ENCODE measurements at regions of chr12 and their contacts with region 1.

Region 1: DNA sequence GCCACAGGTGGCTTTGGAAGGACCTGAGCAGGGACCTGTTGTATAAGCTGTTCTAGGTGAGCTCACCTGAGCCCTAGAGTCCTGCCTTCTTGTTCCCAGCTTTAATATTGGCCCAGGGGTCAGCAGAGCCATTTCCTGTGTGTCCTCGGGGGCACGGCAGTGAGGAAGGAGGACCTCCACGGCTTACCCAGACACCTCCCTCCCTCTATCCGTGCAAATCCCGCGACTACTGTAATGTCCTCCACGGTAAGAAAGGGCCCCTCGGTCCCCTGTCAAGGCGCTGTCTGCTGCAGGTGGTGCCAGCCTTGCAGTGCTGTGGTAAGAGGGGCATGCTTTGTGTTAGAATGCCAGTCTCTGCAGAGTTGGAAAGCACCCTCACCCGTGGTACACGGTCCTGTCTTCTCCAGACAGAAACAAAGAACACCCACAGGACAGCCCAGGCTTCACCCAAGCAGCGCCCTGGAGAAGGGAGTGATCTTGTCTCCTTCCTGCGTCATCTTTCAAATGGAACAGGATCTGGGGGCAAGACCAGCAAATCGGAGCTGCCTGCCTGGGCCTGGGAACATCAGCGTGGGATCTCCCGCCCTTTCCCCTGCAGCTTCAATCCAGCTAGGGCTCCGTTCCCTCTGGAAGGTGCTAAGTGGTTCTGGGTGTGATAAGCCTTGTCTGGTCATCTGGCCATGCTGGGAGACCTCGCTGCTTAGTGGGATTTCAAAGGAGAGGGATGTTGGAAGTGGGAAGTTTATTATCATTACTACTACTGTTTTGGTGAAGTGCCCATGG is 20.2 kb upstream of the FZD10 start:
- DNase-seq: no peak
- H3K4me3 ChIP-seq: no peak overlapping the region
- H3K27ac ChIP-seq: no peak overlapping the region
- H3K4me1 ChIP-seq: no peaks in the 10 kb centered on the region
- H3K27me3 ChIP-seq: no peaks in the 10 kb centered on the region
- CTCF ChIP-seq: no peak
- EP300 ChIP-seq: no peak
- POLR2A ChIP-seq: no peak

Region 2: GRCh38 chr12:130124605-130125244 is 17.4 kb before region 1 on chr12:
- in situ Hi-C with region 1: no loop called
- intact Hi-C with region 1: loop called (anchors 1 kb)
- DNase-seq: no peak
- H3K4me3 ChIP-seq: no peak overlapping the region
- H3K27ac ChIP-seq: no peak overlapping the region
- H3K4me1 ChIP-seq: no peaks in the 10 kb centered on the region
- H3K27me3 ChIP-seq: no peaks in the 10 kb centered on the region
- CTCF ChIP-seq: no peak
- EP300 ChIP-seq: no peak
- POLR2A ChIP-seq: no peak

Region 3: DNA sequence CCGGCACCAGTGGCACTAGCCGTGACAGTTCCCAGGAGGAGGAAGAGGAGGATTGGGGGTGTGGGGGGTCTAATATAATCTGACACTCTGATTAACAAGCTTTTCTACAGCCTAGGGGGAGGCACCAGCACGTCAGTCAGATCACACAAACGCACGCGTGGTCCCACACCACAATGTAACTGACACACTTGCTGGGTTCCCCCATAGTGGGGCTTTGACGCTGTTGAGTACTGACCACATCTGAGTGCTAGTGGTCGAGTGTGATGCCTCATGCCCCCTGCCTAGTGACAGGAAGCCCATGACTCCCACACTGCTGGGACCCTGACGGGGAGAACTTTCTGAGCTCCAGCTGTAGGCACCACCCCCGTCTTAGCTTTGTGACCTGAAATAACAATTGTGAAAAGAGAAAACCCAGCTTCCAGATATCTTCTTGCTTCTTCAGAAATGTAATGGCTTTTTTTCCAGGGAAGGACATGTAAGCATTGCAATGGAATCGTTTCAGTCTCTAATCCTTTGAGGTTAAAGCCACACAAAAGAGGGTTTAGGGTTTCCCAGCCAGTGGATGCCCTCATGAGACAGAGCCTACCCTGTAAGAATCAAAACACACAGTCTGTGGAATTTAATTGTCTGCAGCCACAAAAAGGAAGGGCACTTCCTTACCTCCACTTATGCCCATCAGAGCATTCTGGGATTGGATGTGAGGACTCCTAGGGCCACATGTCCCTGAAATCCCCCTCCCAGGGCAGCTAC is 379.5 kb after region 1 on chr12:
- in situ Hi-C with region 1: no loop called
- intact Hi-C with region 1: no loop called
- DNase-seq: no peak
- H3K4me3 ChIP-seq: no peak overlapping the region
- H3K27ac ChIP-seq: no peak overlapping the region
- H3K4me1 ChIP-seq: no peaks in the 10 kb centered on the region
- H3K27me3 ChIP-seq: no peaks in the 10 kb centered on the region
- CTCF ChIP-seq: no peak
- EP300 ChIP-seq: no peak
- POLR2A ChIP-seq: no peak

Measured in transverse colon (tissue), 4 donors.